A673 (cell line): ENCODE measurements at regions of chr9 and their contacts with region 1.

Region 1: GRCh38 chr9:37149666-37150308 is 29.4 kb downstream of the ZCCHC7 start:
- DNase-seq: peak; percentile 87
- H3K4me3 ChIP-seq: no peak overlapping the region
- H3K27ac ChIP-seq: peak overlapping the region; percentile 81
- H3K4me1 ChIP-seq: peaks cover 60% of the 10 kb centered on the region
- H3K27me3 ChIP-seq: no peaks in the 10 kb centered on the region
- CTCF ChIP-seq: no peak

Region 2: DNA sequence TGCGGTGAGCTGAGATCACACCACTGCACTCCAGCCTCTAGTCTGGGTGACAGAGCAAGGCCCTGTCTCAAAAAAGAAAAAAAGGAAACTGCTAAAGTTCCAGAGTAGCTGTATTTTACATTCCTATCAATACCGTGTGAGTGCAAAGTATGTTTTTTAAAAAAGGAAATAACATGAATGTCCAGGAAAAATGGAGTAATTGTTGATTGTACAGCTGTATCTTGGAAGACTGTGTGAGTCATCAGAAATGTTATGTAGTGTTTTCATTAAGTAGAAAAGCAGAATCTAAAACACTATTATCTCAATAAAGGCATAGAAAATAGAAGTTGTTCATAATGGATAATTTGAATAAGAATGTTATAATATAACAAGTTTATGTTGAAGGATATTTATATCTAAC is 24.5 kb after region 1 on chr9:
- CTCF ChIA-PET with region 1: no interaction called
- POLR2A ChIA-PET with region 1: interaction called, 12 read pairs
- intact Hi-C with region 1: no loop called
- DNase-seq: no peak
- H3K4me3 ChIP-seq: no peak overlapping the region
- H3K27ac ChIP-seq: no peak overlapping the region
- H3K4me1 ChIP-seq: no peaks in the 10 kb centered on the region
- H3K27me3 ChIP-seq: no peaks in the 10 kb centered on the region
- CTCF ChIP-seq: no peak

Region 3: GRCh38 chr9:37191403-37192089 is 41.8 kb after region 1 on chr9:
- CTCF ChIA-PET with region 1: no interaction called
- POLR2A ChIA-PET with region 1: no interaction called
- intact Hi-C with region 1: loop called (anchors 5 kb)
- DNase-seq: no peak
- H3K4me3 ChIP-seq: no peak overlapping the region
- H3K27ac ChIP-seq: no peak overlapping the region
- H3K4me1 ChIP-seq: peaks cover 55% of the 10 kb centered on the region
- H3K27me3 ChIP-seq: no peaks in the 10 kb centered on the region
- CTCF ChIP-seq: 0 out of 2 replicates have a peak, but pooled peaks have one; percentile 11

Region 4: GRCh38 chr9:37209431-37210386 is 59.9 kb after region 1 on chr9:
- CTCF ChIA-PET with region 1: no interaction called
- POLR2A ChIA-PET with region 1: no interaction called
- intact Hi-C with region 1: no loop called
- DNase-seq: peak; percentile 65
- H3K4me3 ChIP-seq: no peak overlapping the region
- H3K27ac ChIP-seq: peak overlapping the region; percentile 26
- H3K4me1 ChIP-seq: peaks cover 31% of the 10 kb centered on the region
- H3K27me3 ChIP-seq: no peaks in the 10 kb centered on the region
- CTCF ChIP-seq: peak; percentile 63